HEK293 (cell line): ENCODE measurements at regions of chr2 and their contacts with region 1.

Region 1: GRCh38 chr2:234881413-234882241 is 70.2 kb upstream of the SH3BP4 start:
- H3K4me3 ChIP-seq: no peak overlapping the region; the same call in 1 of the 2 replicates
- H3K27ac ChIP-seq: peak overlapping the region; percentile 94
- H3K4me1 ChIP-seq: peaks cover 27% of the 10 kb centered on the region
- CTCF ChIP-seq: peak; percentile 90

Region 2: GRCh38 chr2:234632527-234633391 is 248.9 kb before region 1 on chr2:
- CTCF ChIA-PET with region 1: no interaction called
- POLR2A ChIA-PET with region 1: no interaction called
- H3K4me3 ChIP-seq: no peak overlapping the region
- H3K27ac ChIP-seq: no peak overlapping the region
- H3K4me1 ChIP-seq: no peaks in the 10 kb centered on the region; the same call in 1 of the 2 replicates
- CTCF ChIP-seq: no peak

Region 3: GRCh38 chr2:234851451-234851850 is 30.2 kb before region 1 on chr2:
- CTCF ChIA-PET with region 1: interaction called, 10 read pairs
- POLR2A ChIA-PET with region 1: interaction called, 3 read pairs
- H3K4me3 ChIP-seq: no peak overlapping the region
- H3K27ac ChIP-seq: no peak overlapping the region
- H3K4me1 ChIP-seq: peaks cover 4% of the 10 kb centered on the region; the same call in 1 of the 2 replicates
- CTCF ChIP-seq: no peak

Region 4: GRCh38 chr2:234949762-234950434 is 68.3 kb after region 1 on chr2:
- CTCF ChIA-PET with region 1: interaction called, 18 read pairs
- POLR2A ChIA-PET with region 1: interaction called, 4 read pairs
- H3K4me3 ChIP-seq: no peak overlapping the region
- H3K27ac ChIP-seq: no peak overlapping the region
- H3K4me1 ChIP-seq: peaks cover 18% of the 10 kb centered on the region
- CTCF ChIP-seq: no peak

Region 5: GRCh38 chr2:234981197-234982117 is 99.8 kb after region 1 on chr2:
- CTCF ChIA-PET with region 1: interaction called, 7 read pairs
- POLR2A ChIA-PET with region 1: interaction called, 13 read pairs
- H3K4me3 ChIP-seq: peak overlapping the region; percentile 23
- H3K27ac ChIP-seq: peak overlapping the region; percentile 45
- H3K4me1 ChIP-seq: peaks cover 27% of the 10 kb centered on the region
- CTCF ChIP-seq: no peak

Region 6: DNA sequence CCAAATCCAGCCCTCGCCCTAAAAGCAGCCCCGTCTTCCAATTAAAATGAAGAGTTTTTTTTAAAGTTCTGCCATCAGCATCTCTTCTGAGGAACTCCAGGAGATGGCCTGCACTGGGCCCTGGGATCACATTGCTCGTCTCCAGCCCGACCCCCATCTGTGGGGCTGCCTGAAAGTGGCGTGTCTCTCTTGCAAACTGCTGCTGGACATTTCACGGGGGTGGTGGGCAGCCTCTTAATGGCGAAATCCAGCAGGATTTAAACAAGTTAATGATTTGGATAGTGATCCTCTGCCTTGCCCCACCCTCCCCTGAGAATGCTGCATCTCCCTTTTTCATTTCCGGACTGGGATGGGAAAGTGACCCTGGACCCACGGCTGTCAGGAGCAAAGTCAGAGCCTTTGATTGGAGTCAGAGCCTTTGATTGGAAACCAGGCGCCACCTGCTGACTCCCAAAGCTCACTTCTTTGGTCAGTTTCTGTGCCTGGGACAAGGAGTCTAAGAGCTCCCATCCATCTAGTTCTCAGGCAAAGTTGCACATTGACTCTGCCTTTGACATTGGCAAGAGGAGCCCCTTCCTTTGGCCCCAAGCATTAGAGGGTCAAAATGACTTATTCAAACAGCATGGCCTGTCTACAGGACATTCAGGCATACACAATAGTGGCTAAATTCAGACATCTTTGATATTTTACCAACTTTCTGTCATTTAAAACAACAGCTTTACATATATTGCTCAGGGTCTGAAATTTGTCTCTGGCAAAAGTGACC is 225.4 kb after region 1 on chr2:
- CTCF ChIA-PET with region 1: interaction called, 46 read pairs
- POLR2A ChIA-PET with region 1: no interaction called
- H3K4me3 ChIP-seq: no peak overlapping the region
- H3K27ac ChIP-seq: no peak overlapping the region
- H3K4me1 ChIP-seq: no peaks in the 10 kb centered on the region
- CTCF ChIP-seq: peak; percentile 73